ENCODE measurements at regions of chr6 and their contacts with region 1.

Region 1: GRCh38 chr6:43769526-43770416 is at the start of gene VEGFA:
- H3K4me3 Mint-ChIP-seq: peak within 1 kb of the TSS; percentile 84
- H3K27ac Mint-ChIP-seq: peak within 1 kb of the TSS; percentile 90
- H3K4me1 Mint-ChIP-seq: peaks cover 45% of the 10 kb centered on the region
- H3K27me3 Mint-ChIP-seq: peaks cover 30% of the 10 kb centered on the region

Region 2: GRCh38 chr6:43454696-43455530 is 314.9 kb before region 1 on chr6:
- intact Hi-C with region 1: no loop called
- H3K4me3 Mint-ChIP-seq: peak overlapping the region; percentile 83
- H3K27ac Mint-ChIP-seq: no peak overlapping the region
- H3K4me1 Mint-ChIP-seq: peaks cover 18% of the 10 kb centered on the region
- H3K27me3 Mint-ChIP-seq: peaks cover 37% of the 10 kb centered on the region

Region 3: DNA sequence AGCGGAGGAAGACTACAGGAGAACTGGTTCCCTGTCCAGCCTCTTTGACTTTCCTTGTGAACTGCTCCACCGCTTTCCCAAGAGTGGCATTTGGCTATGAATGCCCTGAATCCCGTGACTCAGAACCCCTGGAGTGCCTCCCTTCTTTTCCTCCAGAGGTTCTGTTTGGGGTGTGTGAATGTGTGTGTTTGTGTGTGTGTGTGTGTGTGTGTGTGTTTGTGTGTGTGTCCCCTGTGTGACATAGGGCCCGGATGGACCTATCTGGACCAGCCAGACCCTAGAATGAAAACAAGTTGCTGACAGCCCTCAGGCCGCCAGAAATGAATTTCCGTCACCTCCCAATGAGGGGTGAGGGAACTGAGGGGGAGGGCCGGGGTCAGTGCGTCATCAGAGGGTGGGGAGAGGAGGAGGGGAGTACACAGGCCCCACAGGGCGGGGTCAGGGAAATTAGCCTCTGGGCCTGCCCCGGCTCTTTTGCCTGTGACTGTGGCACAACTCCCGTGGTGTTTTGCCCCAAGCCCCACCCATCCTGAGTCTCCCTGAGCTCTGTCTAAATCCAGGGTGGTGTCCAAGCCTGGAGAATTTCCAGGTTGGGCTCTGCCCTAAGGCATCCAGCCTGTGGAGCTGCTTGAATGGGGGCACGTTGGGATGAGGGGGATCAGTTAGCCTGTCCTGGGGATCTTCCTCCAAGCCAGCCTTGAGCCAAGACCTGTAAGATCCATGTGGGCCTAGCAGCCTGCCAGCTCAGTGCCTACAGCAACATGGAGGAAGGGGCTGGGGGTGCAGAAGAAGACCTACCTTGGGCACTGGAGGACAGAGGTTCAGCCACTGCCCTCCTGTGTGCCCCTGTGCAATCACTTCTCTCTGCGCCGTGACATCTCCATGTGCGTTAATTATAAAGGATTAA is 67.0 kb before region 1 on chr6:
- intact Hi-C with region 1: no loop called
- H3K4me3 Mint-ChIP-seq: no peak overlapping the region
- H3K27ac Mint-ChIP-seq: peak overlapping the region; percentile 64
- H3K4me1 Mint-ChIP-seq: peaks cover 54% of the 10 kb centered on the region
- H3K27me3 Mint-ChIP-seq: peaks cover 75% of the 10 kb centered on the region

Region 4: GRCh38 chr6:43723737-43724295 is 46.0 kb before region 1 on chr6:
- intact Hi-C with region 1: loop called (anchors 1 kb)
- H3K4me3 Mint-ChIP-seq: no peak overlapping the region
- H3K27ac Mint-ChIP-seq: peak overlapping the region; percentile 30
- H3K4me1 Mint-ChIP-seq: peaks cover 49% of the 10 kb centered on the region
- H3K27me3 Mint-ChIP-seq: peaks cover 86% of the 10 kb centered on the region

Region 5: DNA sequence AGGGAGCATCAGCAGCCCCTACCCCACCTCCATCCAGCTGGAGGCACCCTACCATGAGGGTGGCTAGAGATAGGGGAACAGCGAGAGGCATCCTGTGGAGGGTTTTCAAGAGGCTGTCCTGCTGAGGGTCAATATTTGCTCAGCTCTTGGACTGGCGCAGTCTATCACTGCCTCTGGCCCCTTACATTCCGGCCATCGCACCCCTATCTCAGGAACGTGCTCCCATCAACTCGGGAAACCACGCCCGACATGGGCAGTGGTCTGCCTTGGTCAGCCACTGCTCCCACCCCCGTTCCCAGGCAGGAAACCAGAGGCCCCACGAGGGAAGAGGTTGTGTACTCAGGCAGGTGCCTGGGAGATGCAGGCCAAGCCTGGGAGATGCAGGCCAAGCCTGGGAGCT is 58.1 kb after region 1 on chr6:
- intact Hi-C with region 1: no loop called
- H3K4me3 Mint-ChIP-seq: no peak overlapping the region
- H3K27ac Mint-ChIP-seq: no peak overlapping the region
- H3K4me1 Mint-ChIP-seq: peaks cover 18% of the 10 kb centered on the region
- H3K27me3 Mint-ChIP-seq: peaks cover 15% of the 10 kb centered on the region

Region 6: GRCh38 chr6:43838276-43839036 is 68.7 kb after region 1 on chr6:
- intact Hi-C with region 1: loop called (anchors 5 kb)
- H3K4me3 Mint-ChIP-seq: no peak overlapping the region
- H3K27ac Mint-ChIP-seq: peak overlapping the region; percentile 72
- H3K4me1 Mint-ChIP-seq: peaks cover 16% of the 10 kb centered on the region
- H3K27me3 Mint-ChIP-seq: peaks cover 3% of the 10 kb centered on the region

Region 7: DNA sequence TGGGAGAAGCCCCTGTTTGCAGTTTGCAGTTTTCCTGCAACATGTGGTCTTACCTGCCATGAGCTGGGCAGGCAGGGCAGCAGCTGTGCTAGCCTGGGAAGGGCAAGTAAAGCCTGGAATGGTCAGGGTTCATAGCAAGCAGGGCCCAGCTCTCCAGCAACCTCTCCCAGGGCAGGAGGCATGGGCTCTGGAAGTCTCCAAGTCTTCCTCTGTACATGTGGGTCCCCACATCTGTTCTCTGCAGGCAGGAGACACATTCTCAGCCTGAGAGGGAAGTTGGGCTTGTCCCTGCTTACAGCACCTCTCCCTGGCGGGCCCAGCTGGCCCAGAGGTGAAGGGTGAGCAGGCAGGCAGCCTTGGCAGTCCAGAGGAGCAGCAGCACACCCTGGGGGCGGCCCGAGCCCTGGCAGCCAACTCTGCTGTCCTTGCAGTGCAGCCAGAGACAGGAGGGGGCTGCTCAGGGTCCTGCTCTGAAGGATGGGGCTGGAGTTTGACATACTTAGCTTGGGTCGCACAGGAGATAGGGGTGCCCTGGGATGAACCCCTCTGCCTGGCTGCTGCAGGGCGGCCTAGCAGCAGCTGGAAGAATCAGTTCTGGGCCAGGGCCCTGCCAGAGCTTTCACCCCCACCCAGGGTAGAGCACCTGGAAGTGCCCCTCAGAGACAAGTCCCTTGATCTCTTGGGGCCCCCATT is 181.4 kb after region 1 on chr6:
- intact Hi-C with region 1: loop called (anchors 1 kb)
- H3K4me3 Mint-ChIP-seq: no peak overlapping the region
- H3K27ac Mint-ChIP-seq: peak overlapping the region; percentile 17
- H3K4me1 Mint-ChIP-seq: peaks cover 7% of the 10 kb centered on the region
- H3K27me3 Mint-ChIP-seq: peaks cover 22% of the 10 kb centered on the region

Region 8: GRCh38 chr6:44001318-44002066 is 231.7 kb after region 1 on chr6:
- intact Hi-C with region 1: no loop called
- H3K4me3 Mint-ChIP-seq: peak overlapping the region; percentile 62
- H3K27ac Mint-ChIP-seq: peak overlapping the region; percentile 76
- H3K4me1 Mint-ChIP-seq: peaks cover 59% of the 10 kb centered on the region
- H3K27me3 Mint-ChIP-seq: peaks cover 81% of the 10 kb centered on the region

Region 9: GRCh38 chr6:44058617-44059358 is 289.0 kb after region 1 on chr6:
- intact Hi-C with region 1: loop called (anchors 5 kb)
- H3K4me3 Mint-ChIP-seq: peak overlapping the region; percentile 77
- H3K27ac Mint-ChIP-seq: peak overlapping the region; percentile 100
- H3K4me1 Mint-ChIP-seq: peaks cover 84% of the 10 kb centered on the region
- H3K27me3 Mint-ChIP-seq: no peaks in the 10 kb centered on the region

Measured in dendritic cell treated with granulocyte-macrophage colony-stimulating factor and Interleukin-4, amounts not matched to agents 40 ng/mL and 50 ng/mL, for 4 days (primary cell).